ENCODE measurements at regions of chr7 and their contacts with region 1.

Region 1: GRCh38 chr7:128940494-128941322 is 3.0 kb downstream of the IRF5 start:
- DNase-seq: peak; percentile 91
- ATAC-seq: peak; percentile 72
- H3K4me3 ChIP-seq: peak overlapping the region; percentile 40 to 90 (median 84)
- H3K4me3 Mint-ChIP-seq: peak overlapping the region; percentile 94
- H3K27ac ChIP-seq: peak overlapping the region; percentile 89 to 99
- H3K27ac Mint-ChIP-seq: peak overlapping the region; percentile 97
- H3K4me1 ChIP-seq: peaks cover 31 to 44% of the 10 kb centered on the region in 2 donors
- H3K4me1 Mint-ChIP-seq: peaks cover 56% of the 10 kb centered on the region
- H3K27me3 ChIP-seq: no peaks in the 10 kb centered on the region
- H3K27me3 Mint-ChIP-seq: no peaks in the 10 kb centered on the region
- CTCF ChIP-seq: no peak

Region 2: GRCh38 chr7:128878296-128879105 is 62.2 kb before region 1 on chr7:
- CTCF ChIA-PET with region 1: no interaction called
- POLR2A ChIA-PET with region 1: no interaction called
- intact Hi-C with region 1: no loop called
- DNase-seq: no peak
- ATAC-seq: no peak
- H3K4me3 ChIP-seq: no peak overlapping the region
- H3K4me3 Mint-ChIP-seq: no peak overlapping the region
- H3K27ac ChIP-seq: no peak overlapping the region
- H3K27ac Mint-ChIP-seq: no peak overlapping the region
- H3K4me1 ChIP-seq: no peaks in the 10 kb centered on the region
- H3K4me1 Mint-ChIP-seq: no peaks in the 10 kb centered on the region
- H3K27me3 ChIP-seq: peaks cover 0 to 3% (median 0%) of the 10 kb centered on the region in 4 experiments
- H3K27me3 Mint-ChIP-seq: no peaks in the 10 kb centered on the region
- CTCF ChIP-seq: no peak

Region 3: GRCh38 chr7:128954830-128955802 is 14.4 kb after region 1 on chr7:
- CTCF ChIA-PET with region 1: interaction called, 26 read pairs
- POLR2A ChIA-PET with region 1: interaction called, 15 read pairs
- intact Hi-C with region 1: loop called (anchors 2 kb)
- DNase-seq: peak; percentile 82
- ATAC-seq: peak; percentile 85
- H3K4me3 ChIP-seq: peak overlapping the region in 4 of 5 experiments; percentile 4 to 56 (median 33)
- H3K4me3 Mint-ChIP-seq: peak overlapping the region; percentile 80
- H3K27ac ChIP-seq: peak overlapping the region; percentile 85 to 92
- H3K27ac Mint-ChIP-seq: peak overlapping the region; percentile 95
- H3K4me1 ChIP-seq: peaks cover 17 to 21% of the 10 kb centered on the region in 2 donors
- H3K4me1 Mint-ChIP-seq: peaks cover 49% of the 10 kb centered on the region
- H3K27me3 ChIP-seq: no peaks in the 10 kb centered on the region
- H3K27me3 Mint-ChIP-seq: no peaks in the 10 kb centered on the region
- CTCF ChIP-seq: peak; percentile 48

Region 4: DNA sequence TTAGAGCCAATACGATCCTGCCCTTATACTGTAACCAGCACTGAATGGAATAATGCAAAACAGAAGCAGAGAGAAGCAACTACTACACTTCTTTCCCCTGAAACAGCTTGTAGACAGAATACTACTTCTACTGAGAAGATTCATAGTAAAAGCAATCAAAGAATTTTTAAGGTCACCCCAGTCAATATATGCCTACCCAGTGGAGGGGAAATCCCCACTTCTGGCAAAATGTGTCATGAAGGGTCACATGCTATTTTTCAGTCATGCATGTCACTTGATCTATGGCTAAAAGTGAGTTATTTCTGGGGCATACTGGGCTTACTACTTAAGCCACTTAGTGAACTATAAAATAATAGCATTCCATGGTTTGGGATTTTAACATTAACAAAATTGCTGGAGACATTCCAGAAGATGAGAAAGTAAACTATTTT is 22.6 kb after region 1 on chr7:
- CTCF ChIA-PET with region 1: interaction called, 12 read pairs
- POLR2A ChIA-PET with region 1: interaction called, 21 read pairs
- intact Hi-C with region 1: loop called (anchors 1 kb)
- DNase-seq: peak; percentile 87
- ATAC-seq: peak; percentile 95
- H3K4me3 ChIP-seq: peak overlapping the region in 1 of 5 experiments; percentile 36
- H3K4me3 Mint-ChIP-seq: peak overlapping the region; percentile 74
- H3K27ac ChIP-seq: peak overlapping the region; percentile 80 to 92
- H3K27ac Mint-ChIP-seq: peak overlapping the region; percentile 91
- H3K4me1 ChIP-seq: peaks cover 16% of the 10 kb centered on the region in 2 donors
- H3K4me1 Mint-ChIP-seq: peaks cover 27% of the 10 kb centered on the region
- H3K27me3 ChIP-seq: no peaks in the 10 kb centered on the region
- H3K27me3 Mint-ChIP-seq: no peaks in the 10 kb centered on the region
- CTCF ChIP-seq: no peak

Region 5: GRCh38 chr7:129030440-129030839 is 89.7 kb after region 1 on chr7:
- CTCF ChIA-PET with region 1: no interaction called
- POLR2A ChIA-PET with region 1: interaction called, 10 read pairs
- intact Hi-C with region 1: no loop called
- DNase-seq: no peak
- ATAC-seq: no peak
- H3K4me3 ChIP-seq: no peak overlapping the region
- H3K4me3 Mint-ChIP-seq: no peak overlapping the region
- H3K27ac ChIP-seq: no peak overlapping the region
- H3K27ac Mint-ChIP-seq: no peak overlapping the region
- H3K4me1 ChIP-seq: no peaks in the 10 kb centered on the region
- H3K4me1 Mint-ChIP-seq: peaks cover 32% of the 10 kb centered on the region
- H3K27me3 ChIP-seq: no peaks in the 10 kb centered on the region
- H3K27me3 Mint-ChIP-seq: no peaks in the 10 kb centered on the region
- CTCF ChIP-seq: no peak